MCF 10A (cell line): ENCODE measurements at regions of chr7 and their contacts with region 1.

Region 1: DNA sequence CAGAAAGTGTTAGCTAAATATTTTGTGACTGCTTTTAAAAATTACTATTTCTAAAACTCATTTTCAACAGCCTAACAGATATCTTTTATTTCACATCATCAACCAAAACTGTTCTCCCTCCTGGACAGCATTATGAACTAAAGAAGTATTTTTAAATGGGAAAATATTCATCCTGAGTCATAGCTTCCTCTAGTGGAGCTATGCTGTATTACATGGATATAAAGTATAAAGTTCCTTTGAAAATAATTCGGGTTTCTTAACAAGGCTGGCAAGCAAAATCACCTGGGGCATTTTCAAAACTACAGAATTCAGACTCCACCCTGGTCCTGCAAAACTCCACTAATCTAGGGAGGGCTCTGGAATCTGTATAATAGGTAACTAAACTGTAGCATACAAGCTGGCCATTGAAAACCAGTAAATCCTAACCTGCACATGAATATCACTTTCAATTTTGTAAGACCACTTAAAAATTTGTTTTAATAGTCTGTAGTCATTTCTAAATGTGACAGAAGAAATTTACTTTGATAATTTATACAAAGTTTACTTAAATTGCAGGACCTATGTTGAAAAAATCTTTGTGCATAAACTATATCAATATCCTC is 53.5 kb downstream of the SCIN start:
- DNase-seq: peak; percentile 47
- H3K4me3 Mint-ChIP-seq: no peak overlapping the region
- H3K27ac Mint-ChIP-seq: no peak overlapping the region
- H3K4me1 Mint-ChIP-seq: no peaks in the 10 kb centered on the region
- H3K27me3 Mint-ChIP-seq: peaks cover 23% of the 10 kb centered on the region
- CTCF ChIP-seq: peak; percentile 62

Region 2: GRCh38 chr7:12518920-12519681 is 104.9 kb before region 1 on chr7:
- CTCF ChIA-PET with region 1: interaction called, 119 read pairs
- POLR2A ChIA-PET with region 1: interaction called, 5 read pairs
- intact Hi-C with region 1: no loop called
- DNase-seq: peak; percentile 20
- H3K4me3 Mint-ChIP-seq: no peak overlapping the region
- H3K27ac Mint-ChIP-seq: no peak overlapping the region
- H3K4me1 Mint-ChIP-seq: no peaks in the 10 kb centered on the region
- H3K27me3 Mint-ChIP-seq: peaks cover 35% of the 10 kb centered on the region
- CTCF ChIP-seq: peak; percentile 25

Region 3: DNA sequence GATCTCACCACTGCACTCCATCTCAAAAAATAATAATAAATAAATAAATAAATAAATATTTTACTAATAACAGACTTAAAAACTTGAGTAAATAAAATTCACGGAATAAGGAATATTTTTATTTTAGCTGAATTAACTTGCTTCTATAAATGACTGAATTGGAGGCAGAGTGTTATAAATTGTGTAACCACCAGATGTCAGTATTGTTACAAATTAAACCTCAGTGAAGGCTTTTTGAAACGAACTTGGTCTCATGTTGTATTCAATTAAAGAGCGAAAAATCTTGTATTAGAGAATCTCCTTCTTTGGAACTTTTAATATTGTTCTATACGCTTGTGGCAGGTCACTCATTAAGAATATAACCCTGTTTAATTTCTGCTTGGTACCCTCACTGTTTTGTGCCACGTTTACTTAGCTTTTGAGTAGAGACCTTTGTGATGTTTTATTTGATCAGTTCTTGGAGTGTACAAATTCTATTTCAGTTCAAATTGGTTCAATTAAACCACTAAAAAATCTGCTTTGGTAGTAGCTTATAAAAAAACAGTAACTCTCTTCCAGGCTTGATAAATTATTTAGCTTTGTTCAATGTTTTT is 99.1 kb before region 1 on chr7:
- CTCF ChIA-PET with region 1: interaction called, 119 read pairs
- POLR2A ChIA-PET with region 1: interaction called, 5 read pairs
- intact Hi-C with region 1: loop called (anchors 1 kb)
- DNase-seq: peak; percentile 56
- H3K4me3 Mint-ChIP-seq: no peak overlapping the region
- H3K27ac Mint-ChIP-seq: no peak overlapping the region
- H3K4me1 Mint-ChIP-seq: no peaks in the 10 kb centered on the region
- H3K27me3 Mint-ChIP-seq: peaks cover 35% of the 10 kb centered on the region
- CTCF ChIP-seq: peak; percentile 56

Region 4: GRCh38 chr7:12531784-12532183 is 92.2 kb before region 1 on chr7:
- CTCF ChIA-PET with region 1: interaction called, 119 read pairs
- POLR2A ChIA-PET with region 1: no interaction called
- intact Hi-C with region 1: no loop called
- DNase-seq: no peak
- H3K4me3 Mint-ChIP-seq: no peak overlapping the region
- H3K27ac Mint-ChIP-seq: no peak overlapping the region
- H3K4me1 Mint-ChIP-seq: no peaks in the 10 kb centered on the region
- H3K27me3 Mint-ChIP-seq: no peaks in the 10 kb centered on the region
- CTCF ChIP-seq: no peak

Region 5: DNA sequence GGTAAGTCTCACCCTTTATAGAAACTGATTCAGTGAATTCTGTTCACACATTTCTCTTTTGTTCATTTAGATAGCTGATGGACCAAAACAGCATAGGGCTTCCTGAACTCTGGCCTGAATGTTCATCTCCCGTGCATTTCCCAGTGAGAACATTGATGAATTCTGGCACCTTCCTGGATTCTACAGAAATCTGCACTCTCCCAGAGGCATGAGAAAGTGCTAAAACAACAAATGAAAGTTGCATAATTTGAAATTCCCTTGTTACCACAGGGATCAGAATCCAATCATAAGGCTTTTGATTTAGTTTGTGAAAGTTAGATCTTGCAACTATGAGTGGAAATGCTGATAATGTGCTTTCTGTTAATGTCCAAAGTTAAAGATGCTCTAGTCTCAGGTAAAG is 83.1 kb before region 1 on chr7:
- CTCF ChIA-PET with region 1: interaction called, 16 read pairs
- POLR2A ChIA-PET with region 1: no interaction called
- intact Hi-C with region 1: no loop called
- DNase-seq: peak; percentile 30
- H3K4me3 Mint-ChIP-seq: no peak overlapping the region
- H3K27ac Mint-ChIP-seq: no peak overlapping the region
- H3K4me1 Mint-ChIP-seq: peaks cover 5% of the 10 kb centered on the region
- H3K27me3 Mint-ChIP-seq: no peaks in the 10 kb centered on the region
- CTCF ChIP-seq: no peak

Region 6: DNA sequence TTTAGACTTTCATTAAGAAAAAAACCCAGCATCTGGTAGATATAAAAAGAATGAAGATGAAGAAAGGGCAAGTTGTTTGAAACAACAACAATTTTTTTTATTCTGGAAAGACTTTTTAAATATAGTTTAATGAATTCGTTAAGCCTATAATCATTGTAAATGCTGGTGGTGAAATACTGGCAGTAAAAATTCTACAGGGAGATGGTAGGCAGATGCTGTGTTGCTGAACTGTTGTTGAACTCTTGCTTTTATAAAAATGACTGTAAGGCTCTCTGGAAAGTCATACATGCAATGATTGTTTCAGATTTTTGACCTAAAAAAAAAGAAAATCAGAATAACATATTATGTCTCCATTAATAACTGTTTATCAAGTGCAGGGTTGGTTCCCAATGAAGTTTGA is 14.4 kb before region 1 on chr7:
- CTCF ChIA-PET with region 1: interaction called, 10 read pairs
- POLR2A ChIA-PET with region 1: no interaction called
- intact Hi-C with region 1: no loop called
- DNase-seq: no peak
- H3K4me3 Mint-ChIP-seq: no peak overlapping the region
- H3K27ac Mint-ChIP-seq: no peak overlapping the region
- H3K4me1 Mint-ChIP-seq: no peaks in the 10 kb centered on the region
- H3K27me3 Mint-ChIP-seq: no peaks in the 10 kb centered on the region
- CTCF ChIP-seq: no peak

Region 7: DNA sequence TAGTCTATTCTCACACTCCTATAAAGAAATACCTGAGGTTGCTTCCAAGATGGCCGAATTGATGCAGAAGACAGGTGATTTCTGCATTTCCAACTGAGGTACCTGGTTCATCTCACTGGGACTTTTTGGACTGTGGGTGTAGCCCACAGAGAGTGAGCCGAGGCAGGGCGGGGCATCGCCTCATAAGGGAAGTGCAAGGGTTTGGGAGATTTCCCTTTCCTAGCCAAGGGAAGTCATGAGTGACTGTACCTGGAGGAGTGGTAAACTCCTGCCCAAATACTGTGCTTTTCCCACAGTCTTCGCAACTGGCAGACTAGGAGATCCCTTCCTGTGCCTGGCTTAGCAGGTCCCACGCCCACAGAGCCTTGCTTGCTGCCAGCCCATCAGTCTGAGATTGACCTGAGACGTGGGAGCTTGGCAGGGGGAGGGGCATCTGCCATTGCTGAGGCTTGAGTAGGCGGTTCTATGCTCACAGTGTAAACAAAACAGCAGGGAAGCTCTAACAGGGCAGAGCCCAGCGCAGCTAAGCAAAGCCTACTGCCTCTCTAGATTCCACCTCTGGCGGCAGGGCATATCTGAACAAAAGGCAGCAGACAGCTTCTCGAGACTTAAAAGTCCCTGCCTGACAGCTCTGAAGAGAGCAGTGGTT is 215.6 kb after region 1 on chr7:
- CTCF ChIA-PET with region 1: no interaction called
- POLR2A ChIA-PET with region 1: no interaction called
- intact Hi-C with region 1: no loop called
- DNase-seq: peak; percentile 18
- H3K4me3 Mint-ChIP-seq: no peak overlapping the region
- H3K27ac Mint-ChIP-seq: no peak overlapping the region
- H3K4me1 Mint-ChIP-seq: no peaks in the 10 kb centered on the region
- H3K27me3 Mint-ChIP-seq: no peaks in the 10 kb centered on the region
- CTCF ChIP-seq: no peak

Region 8: GRCh38 chr7:13262929-13263530 is 639.0 kb after region 1 on chr7:
- CTCF ChIA-PET with region 1: interaction called, 11 read pairs
- POLR2A ChIA-PET with region 1: no interaction called
- intact Hi-C with region 1: no loop called
- DNase-seq: peak; percentile 57
- H3K4me3 Mint-ChIP-seq: no peak overlapping the region
- H3K27ac Mint-ChIP-seq: no peak overlapping the region
- H3K4me1 Mint-ChIP-seq: no peaks in the 10 kb centered on the region
- H3K27me3 Mint-ChIP-seq: no peaks in the 10 kb centered on the region
- CTCF ChIP-seq: peak; percentile 59